Activated CD4-positive, alpha-beta T cell treated with anti-CD3 and anti-CD28 coated beads for 36 hours (primary cell): ENCODE measurements at regions of chr19 and their contacts with region 1.

Region 1: GRCh38 chr19:58278157-58279041 is at the start of gene ZNF8:
- DNase-seq: peak; percentile 99
- ATAC-seq: peak; percentile 98
- H3K4me3 Mint-ChIP-seq: peak within 1 kb of the TSS; percentile 98
- H3K27ac Mint-ChIP-seq: peak within 1 kb of the TSS; percentile 95
- H3K4me1 Mint-ChIP-seq: peaks cover 28% of the 10 kb centered on the region
- H3K27me3 Mint-ChIP-seq: no peaks in the 10 kb centered on the region
- total RNA-seq, gene ZNF8: 4.4 to 4.5 TPM

Region 2: GRCh38 chr19:57578487-57579205 is 699.8 kb before region 1 on chr19 and contains the start of gene ZNF416:
- CTCF ChIA-PET with region 1: no interaction called
- POLR2A ChIA-PET with region 1: no interaction called
- intact Hi-C with region 1: loop called in 1 of 2 experiments (anchors 1 kb)
- DNase-seq: peak; percentile 97
- ATAC-seq: peak; percentile 96
- H3K4me3 Mint-ChIP-seq: peak within 1 kb of the TSS; percentile 77
- H3K27ac Mint-ChIP-seq: peak within 1 kb of the TSS; percentile 77
- H3K4me1 Mint-ChIP-seq: peaks cover 23% of the 10 kb centered on the region
- H3K27me3 Mint-ChIP-seq: no peaks in the 10 kb centered on the region
- total RNA-seq, gene ZNF416: 3.3 to 3.7 TPM

Region 3: GRCh38 chr19:58305065-58305931 is 26.9 kb after region 1 on chr19 and contains the start of gene ERVK3-1:
- CTCF ChIA-PET with region 1: interaction called, 3 read pairs
- POLR2A ChIA-PET with region 1: no interaction called
- intact Hi-C with region 1: loop called (anchors 1 kb)
- DNase-seq: peak; percentile 97
- ATAC-seq: peak; percentile 98
- H3K4me3 Mint-ChIP-seq: peak within 1 kb of the TSS; percentile 99
- H3K27ac Mint-ChIP-seq: peak within 1 kb of the TSS; percentile 100
- H3K4me1 Mint-ChIP-seq: peaks cover 52% of the 10 kb centered on the region
- H3K27me3 Mint-ChIP-seq: no peaks in the 10 kb centered on the region
- total RNA-seq, gene ERVK3-1: 38.6 to 53.6 TPM

Region 4: GRCh38 chr19:58362272-58362994 is 84.0 kb after region 1 on chr19 and contains the start of gene ZNF497:
- CTCF ChIA-PET with region 1: no interaction called
- POLR2A ChIA-PET with region 1: no interaction called
- intact Hi-C with region 1: loop called in 1 of 2 experiments (anchors 1 kb)
- DNase-seq: peak; percentile 99
- ATAC-seq: peak; percentile 94
- H3K4me3 Mint-ChIP-seq: peak within 1 kb of the TSS; percentile 86
- H3K27ac Mint-ChIP-seq: peak within 1 kb of the TSS; percentile 93
- H3K4me1 Mint-ChIP-seq: peaks cover 7% of the 10 kb centered on the region
- H3K27me3 Mint-ChIP-seq: no peaks in the 10 kb centered on the region
- total RNA-seq, gene ZNF497: 1.1 to 1.5 TPM

Region 5: GRCh38 chr19:58434217-58434616 is 155.8 kb after region 1 on chr19:
- CTCF ChIA-PET with region 1: no interaction called
- POLR2A ChIA-PET with region 1: no interaction called
- intact Hi-C with region 1: no loop called
- DNase-seq: no peak
- ATAC-seq: no peak
- H3K4me3 Mint-ChIP-seq: no peak overlapping the region
- H3K27ac Mint-ChIP-seq: no peak overlapping the region
- H3K4me1 Mint-ChIP-seq: peaks cover 14% of the 10 kb centered on the region
- H3K27me3 Mint-ChIP-seq: no peaks in the 10 kb centered on the region

Region 6: GRCh38 chr19:58451358-58452101 is 173.1 kb after region 1 on chr19 and contains the start of gene ZNF324B:
- CTCF ChIA-PET with region 1: no interaction called
- POLR2A ChIA-PET with region 1: no interaction called
- intact Hi-C with region 1: loop called in 1 of 2 experiments (anchors 1 kb)
- DNase-seq: peak; percentile 98
- ATAC-seq: peak; percentile 99
- H3K4me3 Mint-ChIP-seq: peak within 1 kb of the TSS; percentile 77
- H3K27ac Mint-ChIP-seq: peak within 1 kb of the TSS; percentile 55
- H3K4me1 Mint-ChIP-seq: peaks cover 25% of the 10 kb centered on the region
- H3K27me3 Mint-ChIP-seq: peaks cover 15% of the 10 kb centered on the region
- total RNA-seq, gene ZNF324B: 5.8 to 7.5 TPM

Region 7: DNA sequence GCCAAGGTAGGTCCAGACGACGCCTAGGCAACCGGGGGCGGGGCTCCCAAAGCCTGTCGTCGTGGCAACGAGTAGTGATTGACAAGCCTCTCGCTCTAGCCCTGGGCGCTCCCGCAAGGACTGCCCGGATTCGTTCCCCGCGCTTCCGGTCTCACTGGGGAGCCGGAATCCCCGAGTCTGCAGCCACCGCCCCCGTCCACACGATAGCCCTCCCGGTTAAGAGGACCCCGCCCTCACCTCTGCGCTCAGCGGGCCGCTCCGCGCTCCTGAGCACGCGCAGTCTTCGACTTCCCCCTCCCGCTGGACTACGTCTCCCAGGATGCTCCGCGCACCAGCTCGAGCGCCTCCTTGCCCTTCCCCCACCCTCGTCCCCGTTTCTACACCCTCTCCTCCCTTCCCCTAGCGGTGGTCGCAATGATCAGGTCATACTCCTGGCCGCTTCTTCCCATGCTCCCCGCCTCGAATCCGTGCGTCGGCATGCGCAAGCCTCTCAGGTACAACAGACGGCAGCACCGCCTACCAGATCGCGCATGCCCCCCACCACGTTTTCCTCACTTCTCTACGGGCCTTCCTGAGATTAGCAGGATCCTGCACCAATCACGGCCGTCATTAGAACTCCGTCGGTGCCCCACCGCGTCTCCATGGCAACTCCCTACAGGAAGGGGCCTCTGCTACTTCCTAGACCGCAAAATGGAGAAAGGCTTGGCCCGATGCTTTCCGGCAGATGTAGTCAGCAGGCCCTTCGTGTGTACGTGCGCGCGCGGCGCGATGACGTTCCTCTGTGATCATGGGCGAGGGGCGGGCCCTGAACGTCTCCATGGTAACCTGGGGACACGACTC is 294.6 kb after region 1 on chr19 and contains the start of gene MZF1:
- CTCF ChIA-PET with region 1: no interaction called
- POLR2A ChIA-PET with region 1: no interaction called
- intact Hi-C with region 1: loop called in 1 of 2 experiments (anchors 1 kb)
- DNase-seq: peak; percentile 100
- ATAC-seq: peak; percentile 69
- H3K4me3 Mint-ChIP-seq: peak within 1 kb of the TSS; percentile 95
- H3K27ac Mint-ChIP-seq: peak within 1 kb of the TSS; percentile 100
- H3K4me1 Mint-ChIP-seq: peaks cover 38% of the 10 kb centered on the region
- H3K27me3 Mint-ChIP-seq: no peaks in the 10 kb centered on the region
- total RNA-seq, gene MZF1: 14.3 to 15.0 TPM